Spleen (tissue), 13 donors: ENCODE measurements at regions of chr6 and their contacts with region 1.

Region 1: GRCh38 chr6:46221222-46221793 is 50.5 kb upstream of the ENPP5 start:
- DNase-seq: no peak
- H3K4me3 ChIP-seq: no peak overlapping the region
- H3K27ac ChIP-seq: peak overlapping the region in 1 of 8 donors; percentile 54
- H3K4me1 ChIP-seq: peaks cover 0 to 44% (median 25%) of the 10 kb centered on the region in 6 donors
- H3K27me3 ChIP-seq: no peaks in the 10 kb centered on the region
- CTCF ChIP-seq: peak; percentile 35 to 80 (median 71)
- POLR2A ChIP-seq: no peak

Region 2: GRCh38 chr6:46410334-46410953 is 189.1 kb after region 1 on chr6:
- intact Hi-C with region 1: loop called (anchors 5 kb)
- DNase-seq: no peak
- H3K4me3 ChIP-seq: no peak overlapping the region
- H3K27ac ChIP-seq: peak overlapping the region in 1 of 8 donors; percentile 14
- H3K4me1 ChIP-seq: peaks cover 0 to 7% (median 2%) of the 10 kb centered on the region in 6 donors
- H3K27me3 ChIP-seq: no peaks in the 10 kb centered on the region
- CTCF ChIP-seq: peak in 10 of 11 experiments; percentile 34 to 93 (median 71)
- POLR2A ChIP-seq: no peak

Region 3: DNA sequence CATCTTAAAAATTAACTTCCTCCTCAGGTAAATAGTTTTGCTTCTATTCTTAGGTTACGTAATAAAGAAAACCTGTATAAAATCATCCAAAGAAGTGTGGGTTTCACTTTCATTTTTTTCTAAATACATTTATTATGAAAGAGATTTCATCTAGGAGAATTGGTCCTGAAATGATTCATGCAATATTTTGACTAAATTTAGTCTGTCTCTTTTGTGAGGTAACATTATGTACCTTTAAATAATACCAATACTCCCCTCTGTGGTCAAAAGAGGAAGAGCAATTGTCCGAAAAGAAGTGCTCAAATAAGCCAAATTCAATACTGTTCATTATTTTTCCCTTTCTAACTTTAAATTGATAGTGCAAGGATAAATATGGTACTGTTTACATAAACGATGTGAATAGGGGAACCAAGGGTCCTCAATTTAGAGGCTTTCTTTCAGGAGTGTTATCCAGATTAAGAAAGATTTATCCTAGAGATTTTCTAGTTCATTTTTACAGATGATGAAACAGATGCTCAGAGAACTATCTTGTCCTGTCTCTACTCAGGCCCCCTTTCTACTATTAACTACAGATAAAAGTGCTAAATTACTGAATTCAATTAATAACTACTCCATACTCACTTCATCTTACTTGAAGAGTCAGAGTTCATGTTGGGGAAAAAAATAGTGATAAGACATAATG is 405.1 kb after region 1 on chr6:
- intact Hi-C with region 1: loop called (anchors 5 kb)
- DNase-seq: no peak
- H3K4me3 ChIP-seq: no peak overlapping the region
- H3K27ac ChIP-seq: no peak overlapping the region
- H3K4me1 ChIP-seq: peaks cover 0 to 10% (median 7%) of the 10 kb centered on the region in 6 donors
- H3K27me3 ChIP-seq: no peaks in the 10 kb centered on the region
- CTCF ChIP-seq: peak in 10 of 11 experiments; percentile 35 to 72 (median 52)
- POLR2A ChIP-seq: no peak

Region 4: GRCh38 chr6:46637145-46637544 is 415.8 kb after region 1 on chr6:
- intact Hi-C with region 1: no loop called
- DNase-seq: no peak
- H3K4me3 ChIP-seq: no peak overlapping the region
- H3K27ac ChIP-seq: no peak overlapping the region
- H3K4me1 ChIP-seq: no peaks in the 10 kb centered on the region
- H3K27me3 ChIP-seq: peaks cover 0 to 12% (median 0%) of the 10 kb centered on the region in 7 donors
- CTCF ChIP-seq: no peak
- POLR2A ChIP-seq: no peak